ENCODE measurements at regions of chr11 and their contacts with region 1.

Region 1: DNA sequence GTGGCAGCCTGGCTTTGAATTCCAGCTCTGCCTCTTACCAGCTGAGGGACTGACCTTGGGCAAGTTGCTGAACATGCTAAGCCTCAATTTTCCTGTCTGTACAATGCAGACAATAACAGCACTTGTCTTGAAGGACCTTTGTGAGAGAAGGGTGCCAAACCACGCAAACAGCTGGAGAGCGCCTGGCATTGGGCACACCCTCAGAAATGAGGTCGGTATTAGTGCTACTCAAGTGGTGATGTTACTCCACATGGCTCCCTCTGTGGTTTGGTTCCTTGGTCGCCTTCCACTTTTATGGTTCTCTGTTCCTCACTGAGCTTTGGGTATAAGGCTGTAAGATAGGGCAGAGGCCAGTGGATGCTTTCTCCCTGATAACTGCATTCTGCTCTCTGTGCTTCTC is 8.2 kb downstream of the UBASH3B start:
- DNase-seq: no peak
- H3K4me3 ChIP-seq: no peak overlapping the region
- H3K4me3 Mint-ChIP-seq: no peak overlapping the region
- H3K27ac Mint-ChIP-seq: no peak overlapping the region
- H3K4me1 ChIP-seq: peaks cover 18% of the 10 kb centered on the region
- H3K4me1 Mint-ChIP-seq: peaks cover 13% of the 10 kb centered on the region
- H3K27me3 ChIP-seq: no peaks in the 10 kb centered on the region
- H3K27me3 Mint-ChIP-seq: no peaks in the 10 kb centered on the region
- CTCF ChIP-seq: no peak

Region 2: GRCh38 chr11:122486793-122487495 is 176.8 kb before region 1 on chr11:
- CTCF ChIA-PET with region 1: no interaction called
- POLR2A ChIA-PET with region 1: no interaction called
- intact Hi-C with region 1: no loop called
- DNase-seq: peak in 1 of 2 experiments; percentile 19
- H3K4me3 ChIP-seq: no peak overlapping the region
- H3K4me3 Mint-ChIP-seq: no peak overlapping the region
- H3K27ac Mint-ChIP-seq: no peak overlapping the region
- H3K4me1 ChIP-seq: no peaks in the 10 kb centered on the region
- H3K4me1 Mint-ChIP-seq: no peaks in the 10 kb centered on the region
- H3K27me3 ChIP-seq: no peaks in the 10 kb centered on the region
- H3K27me3 Mint-ChIP-seq: peaks cover 16% of the 10 kb centered on the region
- CTCF ChIP-seq: no peak

Region 3: DNA sequence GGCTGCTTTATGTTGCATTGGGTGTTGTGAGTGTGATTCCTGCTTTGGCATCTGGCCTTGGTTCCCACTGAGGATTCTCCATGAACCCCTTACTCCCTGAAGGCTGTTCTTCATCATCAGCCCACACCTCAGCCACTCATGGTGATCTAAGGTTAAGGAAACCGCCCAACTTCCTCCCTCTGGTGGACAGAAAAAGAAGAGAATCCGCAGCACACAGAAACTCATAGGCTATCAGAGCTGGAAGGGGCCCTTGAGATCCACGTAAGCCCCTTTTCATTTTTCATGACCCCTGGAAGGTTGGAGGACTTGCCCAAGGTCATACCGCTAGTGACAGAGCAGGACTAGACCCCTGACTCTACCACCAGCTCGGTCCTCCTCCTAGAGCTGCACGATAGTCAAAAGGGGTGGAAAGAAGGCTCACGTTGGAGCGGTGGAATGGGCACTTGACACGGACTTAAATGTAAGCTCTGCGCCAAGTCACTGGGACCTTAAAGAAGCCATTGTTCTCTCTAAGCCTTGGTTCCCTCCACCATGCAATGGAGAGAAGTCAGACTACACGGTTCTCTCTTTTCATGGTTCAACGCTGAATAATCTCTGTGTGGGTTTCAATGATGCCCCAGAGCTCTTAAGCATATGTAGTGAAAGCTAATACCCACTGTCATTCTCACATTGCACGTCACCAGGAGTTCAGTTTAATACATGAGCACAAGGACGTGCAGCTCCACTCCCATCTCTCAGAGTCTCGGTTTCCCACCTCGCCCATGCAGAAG is 91.0 kb after region 1 on chr11:
- CTCF ChIA-PET with region 1: interaction called, 33 read pairs
- POLR2A ChIA-PET with region 1: no interaction called
- intact Hi-C with region 1: loop called (anchors 1 kb)
- DNase-seq: peak in 1 of 2 experiments; percentile 65
- H3K4me3 ChIP-seq: no peak overlapping the region
- H3K4me3 Mint-ChIP-seq: no peak overlapping the region
- H3K27ac Mint-ChIP-seq: no peak overlapping the region
- H3K4me1 ChIP-seq: no peaks in the 10 kb centered on the region
- H3K4me1 Mint-ChIP-seq: no peaks in the 10 kb centered on the region
- H3K27me3 ChIP-seq: no peaks in the 10 kb centered on the region
- H3K27me3 Mint-ChIP-seq: no peaks in the 10 kb centered on the region
- CTCF ChIP-seq: peak; percentile 72 to 86